AG04450 (cell line): ENCODE measurements at regions of chr1 and their contacts with region 1.

Region 1: GRCh38 chr1:52825868-52826267 is 16.7 kb upstream of the ZYG11A start:
- DNase-seq: no peak
- H3K4me3 ChIP-seq: no peak overlapping the region
- H3K27ac ChIP-seq: no peak overlapping the region
- H3K27me3 ChIP-seq: no peaks in the 10 kb centered on the region
- CTCF ChIP-seq: peak; percentile 35

Region 2: GRCh38 chr1:52668711-52669110 is 157.2 kb before region 1 on chr1:
- CTCF ChIA-PET with region 1: interaction called, 10 read pairs
- POLR2A ChIA-PET with region 1: no interaction called
- DNase-seq: no peak
- H3K4me3 ChIP-seq: no peak overlapping the region
- H3K27ac ChIP-seq: peak overlapping the region; percentile 11
- H3K27me3 ChIP-seq: no peaks in the 10 kb centered on the region
- CTCF ChIP-seq: no peak